ENCODE measurements at regions of chr15 and their contacts with region 1.

Region 1: GRCh38 chr15:34587717-34588674 is 4.5 kb upstream of the GOLGA8B start:
- DNase-seq: peak in 7 of 10 donors; percentile 51 to 82 (median 62)
- H3K4me3 ChIP-seq: peak overlapping the region; percentile 8 to 63 (median 45)
- H3K27ac ChIP-seq: peak overlapping the region in 32 of 59 donors; percentile 6 to 83 (median 57)
- H3K27me3 ChIP-seq: no peaks in the 10 kb centered on the region
- CTCF ChIP-seq: peak; percentile 58 to 90 (median 82)

Region 2: GRCh38 chr15:34065941-34066340 is 522.1 kb before region 1 on chr15:
- intact Hi-C with region 1: loop called in 1 of 2 experiments (anchors 10 kb)
- DNase-seq: no peak
- H3K4me3 ChIP-seq: no peak overlapping the region
- H3K27ac ChIP-seq: no peak overlapping the region
- H3K27me3 ChIP-seq: no peaks in the 10 kb centered on the region
- CTCF ChIP-seq: no peak

Region 3: GRCh38 chr15:34342737-34343575 is 245.0 kb before region 1 on chr15 and contains the starts of genes NOP10 and NUTM1:
- intact Hi-C with region 1: loop called in 1 of 2 experiments (anchors 10 kb)
- DNase-seq: peak; percentile 82 to 93 (median 91)
- H3K4me3 ChIP-seq: peak within 1 kb of the TSS; percentile 61 to 98 (median 83)
- H3K27ac ChIP-seq: peak within 1 kb of the TSS in 58 of 59 donors; percentile 46 to 95 (median 84)
- H3K27me3 ChIP-seq: no peaks in the 10 kb centered on the region
- CTCF ChIP-seq: peak; percentile 86 to 99 (median 95)
- total RNA-seq, gene NOP10: 27.3 to 73.6 (median 47.5) TPM
- total RNA-seq, gene NUTM1: not detected

Region 4: GRCh38 chr15:34514251-34514670 is 73.7 kb before region 1 on chr15:
- intact Hi-C with region 1: loop called (anchors 5 to 10 kb)
- DNase-seq: peak in 2 of 10 donors; percentile 4 to 42
- H3K4me3 ChIP-seq: peak overlapping the region in 57 of 59 donors; percentile 37 to 78 (median 64)
- H3K27ac ChIP-seq: peak overlapping the region in 12 of 59 donors; percentile 13 to 78 (median 48)
- H3K27me3 ChIP-seq: peaks cover 0 to 50% (median 21%) of the 10 kb centered on the region in 45 donors
- CTCF ChIP-seq: no peak